ENCODE measurements at regions of chr18 and their contacts with region 1.

Region 1: GRCh38 chr18:6920099-6920899 is 190.8 kb downstream of the ARHGAP28 start:
- DNase-seq: no peak
- ATAC-seq: peak; percentile 34

Region 2: DNA sequence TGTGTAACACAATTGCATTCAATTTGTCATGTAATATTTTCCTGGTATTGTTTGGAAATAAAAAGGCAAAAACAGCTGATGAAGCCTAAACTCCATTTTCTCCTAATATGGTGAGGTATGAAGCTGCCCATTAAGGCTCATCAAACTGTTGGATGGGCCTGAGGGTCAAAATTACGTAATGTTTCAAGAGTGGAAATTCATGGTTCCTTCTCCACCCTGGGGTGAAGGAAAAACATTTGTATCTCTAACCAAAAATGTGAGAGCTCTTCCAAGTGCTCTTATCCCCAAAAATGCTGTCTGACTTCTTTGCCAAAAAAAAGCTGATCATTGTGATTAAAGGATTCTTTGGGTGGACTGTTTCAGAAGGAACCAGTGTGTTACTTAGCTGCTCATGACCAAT is 98.9 kb before region 1 on chr18:
- intact Hi-C with region 1: no loop called
- DNase-seq: no peak
- ATAC-seq: no peak

Region 3: DNA sequence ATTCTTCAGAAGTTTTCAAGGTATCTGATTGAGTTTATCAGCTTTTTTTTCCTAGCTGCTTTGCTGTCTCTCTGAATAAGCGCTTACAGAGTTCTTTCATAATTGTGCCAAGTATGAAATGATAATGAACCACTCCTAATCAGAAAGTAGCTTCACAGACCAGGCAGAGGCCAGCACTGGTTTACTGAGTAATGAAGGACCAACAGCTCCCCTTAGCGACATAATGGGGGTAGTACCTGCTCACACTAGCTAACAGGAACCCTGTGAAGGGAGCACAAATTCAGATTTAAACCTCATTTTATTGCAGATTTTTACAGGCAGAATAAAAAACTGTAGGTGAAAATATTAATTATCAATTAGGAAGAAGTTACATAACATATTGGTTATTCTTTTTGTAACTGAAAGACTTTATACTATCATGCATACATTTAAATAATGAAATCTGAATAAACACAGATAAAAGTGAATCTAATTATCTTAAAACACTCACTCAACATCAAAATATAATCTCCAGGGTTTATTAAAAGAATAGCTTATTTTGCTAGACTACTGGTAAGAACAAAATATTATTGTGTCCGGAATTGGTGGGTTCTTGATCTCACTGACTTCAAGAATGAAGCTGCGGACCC is 256.9 kb after region 1 on chr18:
- intact Hi-C with region 1: loop called (anchors 5 kb)
- DNase-seq: no peak
- ATAC-seq: peak; percentile 88